Activated CD4-positive, alpha-beta memory T cell treated with anti-CD3 and anti-CD28 coated beads for 36 hours (primary cell): ENCODE measurements at regions of chr17 and their contacts with region 1.

Region 1: GRCh38 chr17:17849845-17850373 is 13.1 kb upstream of the SREBF1 start:
- DNase-seq: peak; percentile 93
- H3K4me3 Mint-ChIP-seq: no peak overlapping the region
- H3K27ac Mint-ChIP-seq: peak overlapping the region; percentile 97
- H3K4me1 Mint-ChIP-seq: peaks cover 70% of the 10 kb centered on the region
- H3K27me3 Mint-ChIP-seq: no peaks in the 10 kb centered on the region

Region 2: GRCh38 chr17:17710728-17711541 is 139.0 kb before region 1 on chr17:
- CTCF ChIA-PET with region 1: no interaction called
- POLR2A ChIA-PET with region 1: no interaction called
- intact Hi-C with region 1: no loop called
- DNase-seq: no peak
- H3K4me3 Mint-ChIP-seq: no peak overlapping the region
- H3K27ac Mint-ChIP-seq: no peak overlapping the region
- H3K4me1 Mint-ChIP-seq: peaks cover 7% of the 10 kb centered on the region
- H3K27me3 Mint-ChIP-seq: no peaks in the 10 kb centered on the region

Region 3: GRCh38 chr17:17792551-17793377 is 57.1 kb before region 1 on chr17:
- CTCF ChIA-PET with region 1: no interaction called
- POLR2A ChIA-PET with region 1: no interaction called
- intact Hi-C with region 1: loop called (anchors 2 kb)
- DNase-seq: peak; percentile 78
- H3K4me3 Mint-ChIP-seq: no peak overlapping the region
- H3K27ac Mint-ChIP-seq: no peak overlapping the region
- H3K4me1 Mint-ChIP-seq: peaks cover 20% of the 10 kb centered on the region
- H3K27me3 Mint-ChIP-seq: no peaks in the 10 kb centered on the region

Region 4: DNA sequence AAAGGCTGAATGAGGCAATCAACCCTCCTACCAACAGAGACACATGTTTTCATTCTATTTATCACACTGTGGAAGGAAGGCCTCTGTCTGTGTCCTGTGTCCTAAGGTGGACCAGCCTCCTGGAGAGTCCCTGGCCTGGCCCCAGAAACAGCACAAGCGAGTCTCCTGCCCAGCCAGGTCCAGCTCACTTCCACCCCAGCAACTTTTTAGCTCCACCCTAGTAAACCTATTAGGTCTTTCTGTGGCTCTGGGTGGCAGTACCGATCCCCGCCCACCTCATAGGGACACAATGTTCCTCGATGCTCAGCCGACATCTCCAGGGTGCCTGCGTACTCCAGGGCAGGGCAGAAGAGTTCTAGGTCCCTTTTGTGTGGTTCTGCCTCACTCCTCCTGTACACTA is 133.5 kb after region 1 on chr17:
- CTCF ChIA-PET with region 1: no interaction called
- POLR2A ChIA-PET with region 1: no interaction called
- intact Hi-C with region 1: no loop called
- DNase-seq: no peak
- H3K4me3 Mint-ChIP-seq: no peak overlapping the region
- H3K27ac Mint-ChIP-seq: no peak overlapping the region
- H3K4me1 Mint-ChIP-seq: no peaks in the 10 kb centered on the region
- H3K27me3 Mint-ChIP-seq: no peaks in the 10 kb centered on the region

Region 5: GRCh38 chr17:18025241-18025944 is 175.5 kb after region 1 on chr17:
- CTCF ChIA-PET with region 1: no interaction called
- POLR2A ChIA-PET with region 1: no interaction called
- intact Hi-C with region 1: no loop called
- DNase-seq: peak; percentile 65
- H3K4me3 Mint-ChIP-seq: no peak overlapping the region
- H3K27ac Mint-ChIP-seq: no peak overlapping the region
- H3K4me1 Mint-ChIP-seq: peaks cover 13% of the 10 kb centered on the region
- H3K27me3 Mint-ChIP-seq: no peaks in the 10 kb centered on the region